ENCODE measurements at regions of chr17 and their contacts with region 1.

Region 1: DNA sequence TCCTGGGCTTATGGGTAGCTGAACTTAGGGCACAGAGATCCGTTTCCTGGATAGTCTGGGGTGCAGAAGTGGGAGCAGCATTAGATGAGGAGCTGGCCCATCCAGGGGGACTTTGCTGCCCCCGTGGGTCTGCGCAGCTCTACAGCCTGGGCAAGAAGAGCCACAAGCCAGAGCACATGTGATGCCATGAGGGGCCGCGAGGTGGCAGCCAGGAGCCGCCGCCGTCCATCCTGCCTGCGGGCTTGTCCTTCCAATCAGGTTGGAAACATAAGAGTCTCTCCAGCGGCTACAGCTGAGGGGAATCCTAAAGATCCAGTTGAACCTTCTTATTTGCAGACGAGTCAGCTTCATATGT is 21.9 kb downstream of the C1QTNF1 start:
- DNase-seq: peak; percentile 32 to 63 (median 41)
- H3K4me3 ChIP-seq: no peak overlapping the region
- H3K4me3 Mint-ChIP-seq: no peak overlapping the region
- H3K27ac ChIP-seq: no peak overlapping the region
- H3K27ac Mint-ChIP-seq: peak overlapping the region in 2 of 8 donors; percentile 21 to 42
- H3K4me1 ChIP-seq: no peaks in the 10 kb centered on the region
- H3K4me1 Mint-ChIP-seq: peaks cover 4 to 5% (median 4%) of the 10 kb centered on the region in 3 donors
- H3K27me3 ChIP-seq: no peaks in the 10 kb centered on the region
- H3K27me3 Mint-ChIP-seq: peaks cover 23 to 29% of the 10 kb centered on the region in 2 donors

Region 2: DNA sequence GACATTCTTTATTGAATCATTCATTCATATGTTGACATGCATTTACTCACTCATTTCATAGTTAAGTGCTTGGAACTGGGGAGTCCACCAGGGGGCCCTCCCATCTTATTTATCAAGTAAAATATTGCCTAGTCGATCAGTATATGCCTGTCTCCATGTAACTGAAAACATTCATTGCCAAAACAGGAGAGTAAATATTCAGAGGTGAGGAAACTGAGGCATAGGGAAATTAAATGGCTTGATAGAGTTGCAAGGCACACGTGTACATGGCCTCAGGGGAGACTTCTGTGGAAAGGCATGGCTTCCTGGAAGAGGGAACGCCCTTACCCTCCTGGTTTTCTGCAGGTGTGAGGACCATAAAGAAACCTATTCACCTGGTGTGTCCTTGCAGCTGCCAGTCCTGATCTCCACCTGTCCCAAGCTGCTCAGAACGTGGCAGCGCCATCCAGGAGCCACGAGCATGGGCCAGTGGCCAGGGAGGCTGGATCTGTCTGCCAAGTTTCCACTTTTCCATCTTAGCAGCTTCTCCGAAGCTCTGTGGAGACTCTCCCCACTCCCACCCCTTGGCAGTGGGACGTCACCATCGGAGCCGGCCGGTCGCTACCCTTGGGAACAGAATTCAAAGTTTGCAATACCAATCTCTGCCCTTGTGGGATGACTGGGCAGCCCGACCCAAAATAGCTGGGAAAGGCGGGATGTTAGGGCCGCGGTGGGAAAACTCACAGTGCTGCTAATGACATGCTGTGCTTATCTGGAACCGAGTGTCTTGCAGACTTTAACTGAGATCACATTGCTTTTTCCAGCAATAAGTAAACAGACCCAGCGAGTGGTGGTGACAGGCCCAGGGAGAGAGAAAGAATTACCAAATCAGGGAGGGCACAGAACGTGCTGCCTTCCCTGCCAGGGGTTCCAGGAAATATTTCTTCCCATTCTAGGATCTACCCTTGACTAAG is 25.9 kb before region 1 on chr17:
- CTCF ChIA-PET with region 1: interaction called, 13 read pairs
- POLR2A ChIA-PET with region 1: no interaction called
- DNase-seq: peak; percentile 20 to 65 (median 39)
- H3K4me3 ChIP-seq: no peak overlapping the region
- H3K4me3 Mint-ChIP-seq: peak overlapping the region in 1 of 7 donors; percentile 7
- H3K27ac ChIP-seq: no peak overlapping the region
- H3K27ac Mint-ChIP-seq: no peak overlapping the region
- H3K4me1 ChIP-seq: peaks cover 4% of the 10 kb centered on the region
- H3K4me1 Mint-ChIP-seq: peaks cover 7 to 9% (median 9%) of the 10 kb centered on the region in 3 donors
- H3K27me3 ChIP-seq: peaks cover 11% of the 10 kb centered on the region
- H3K27me3 Mint-ChIP-seq: peaks cover 10 to 22% of the 10 kb centered on the region in 2 donors

Measured in CD8-positive, alpha-beta memory T cell (primary cell).